ENCODE measurements at regions of chr11 and their contacts with region 1.

Region 1: DNA sequence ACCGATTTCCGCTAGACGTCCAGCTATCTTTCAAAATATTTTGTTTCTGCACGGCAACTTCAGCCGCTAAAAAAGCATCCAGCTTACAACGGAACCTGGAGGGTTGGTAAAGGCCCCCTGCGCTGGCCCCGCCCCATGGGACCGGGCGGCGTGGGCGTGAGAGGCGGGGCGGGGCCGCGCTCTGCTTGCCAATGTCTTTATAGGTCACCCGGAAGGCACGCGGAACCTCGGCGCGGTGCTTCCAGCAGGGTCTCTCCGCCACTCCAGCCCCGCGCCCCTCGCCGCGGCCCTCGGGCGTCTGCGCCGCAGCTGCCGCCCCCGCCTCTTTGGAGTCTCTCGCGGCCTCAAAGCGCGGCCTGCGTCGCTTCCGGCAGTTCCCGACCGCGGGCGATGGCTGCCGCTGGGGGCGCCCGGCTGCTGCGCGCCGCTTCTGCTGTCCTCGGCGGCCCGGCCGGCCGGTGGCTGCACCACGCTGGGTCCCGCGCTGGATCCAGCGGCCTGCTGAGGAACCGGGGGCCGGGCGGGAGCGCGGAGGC is at the start of gene FDX1:
- DNase-seq: peak; percentile 86
- ATAC-seq: peak; percentile 97
- total RNA-seq, gene FDX1: 21.7 TPM

Region 2: GRCh38 chr11:110200241-110200640 is 229.6 kb before region 1 on chr11:
- intact Hi-C with region 1: loop called (anchors 5 kb)
- DNase-seq: no peak
- ATAC-seq: no peak

Region 3: DNA sequence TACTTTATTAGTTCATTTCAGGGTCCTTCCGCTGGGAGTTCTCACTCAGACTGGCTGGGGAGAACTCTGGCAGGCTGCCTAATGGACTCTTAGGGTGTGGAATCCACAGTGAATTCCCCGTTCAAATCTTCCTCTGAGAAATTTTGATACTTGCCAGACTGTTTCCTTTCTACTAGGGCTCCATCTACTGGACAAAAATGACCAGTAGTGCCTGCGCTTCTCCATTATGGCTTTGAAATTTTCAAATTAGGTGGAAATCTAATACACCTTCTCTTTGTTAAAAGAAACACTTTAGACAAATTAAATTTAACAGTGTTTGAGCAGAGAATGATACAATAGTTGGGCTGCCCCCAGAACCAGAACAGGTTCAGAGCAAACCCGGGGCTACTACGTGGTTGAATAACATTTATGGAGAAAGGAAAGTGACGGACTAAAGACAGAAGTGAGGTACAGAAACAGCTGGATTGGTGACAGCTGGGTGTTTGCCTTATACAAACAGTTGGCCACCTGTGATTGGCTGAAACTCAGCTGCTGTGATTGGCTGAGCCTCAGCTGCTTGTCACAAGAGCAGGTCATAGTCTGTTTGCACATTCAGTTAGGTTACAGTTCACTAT is 53.0 kb before region 1 on chr11:
- intact Hi-C with region 1: loop called (anchors 5 kb)
- DNase-seq: peak; percentile 74
- ATAC-seq: peak; percentile 88

Region 4: DNA sequence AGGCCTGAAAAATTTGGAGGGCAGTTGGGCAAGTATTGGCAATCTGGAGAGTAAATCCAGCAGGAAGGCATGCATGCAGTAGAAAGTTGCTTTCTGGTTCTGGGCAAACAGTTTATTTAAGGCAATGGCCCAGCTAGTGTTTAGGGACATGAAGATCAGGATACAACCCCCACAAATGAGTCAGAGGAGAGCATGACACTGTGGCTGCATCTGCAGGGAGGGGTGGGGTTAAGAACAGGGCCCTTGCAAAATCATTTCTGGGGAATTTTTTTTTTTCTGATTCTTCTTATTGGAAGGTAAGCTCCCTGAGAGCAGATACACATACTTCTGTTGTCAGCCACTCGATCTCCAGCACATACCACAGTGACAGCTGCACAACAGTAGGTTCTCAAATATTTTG is 61.1 kb after region 1 on chr11:
- intact Hi-C with region 1: no loop called
- DNase-seq: no peak
- ATAC-seq: no peak